Ascending aorta (tissue), 2 donors: ENCODE measurements at regions of chr15 and their contacts with region 1.

Region 1: GRCh38 chr15:25724899-25725298 is 138.2 kb downstream of the ATP10A start:
- DNase-seq: peak in 1 of 2 donors; percentile 53
- H3K4me3 ChIP-seq: no peak overlapping the region
- H3K27ac ChIP-seq: no peak overlapping the region
- H3K4me1 ChIP-seq: peaks cover 0 to 19% of the 10 kb centered on the region in 2 donors
- H3K27me3 ChIP-seq: no peaks in the 10 kb centered on the region
- CTCF ChIP-seq: no peak

Region 2: DNA sequence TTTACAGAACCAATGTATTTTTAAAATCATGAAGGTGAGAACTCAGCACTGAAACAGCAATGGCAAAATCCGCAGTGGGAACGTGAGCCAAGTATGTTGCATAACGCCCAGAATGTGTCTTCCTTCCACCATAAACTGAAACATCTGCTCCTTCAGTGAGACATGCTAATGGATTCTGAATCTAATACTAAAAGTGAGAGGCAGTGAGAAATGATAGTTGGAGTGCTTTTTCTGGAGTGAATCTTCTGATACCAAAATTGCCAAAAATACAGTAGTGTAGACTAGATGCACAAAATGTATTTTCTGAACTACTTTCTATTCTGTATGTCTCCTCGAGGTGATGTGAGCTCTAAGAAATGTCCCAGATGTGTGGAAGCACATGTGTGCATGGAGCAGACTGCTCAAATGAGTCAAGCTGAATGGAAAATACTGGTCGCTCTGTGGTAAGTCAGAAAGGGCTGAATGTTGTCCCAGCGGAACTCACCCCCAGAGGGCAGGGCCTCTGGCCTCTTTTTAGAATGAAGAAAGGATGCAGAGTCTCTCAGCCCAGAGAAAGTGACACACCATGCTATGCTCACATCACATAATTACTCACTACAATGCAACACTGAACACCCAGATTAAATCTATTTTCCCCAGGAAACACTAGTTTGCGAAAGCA is 65.2 kb after region 1 on chr15:
- intact Hi-C with region 1: loop called (anchors 5 kb)
- DNase-seq: peak in 1 of 2 donors; percentile 84
- H3K4me3 ChIP-seq: no peak overlapping the region
- H3K27ac ChIP-seq: peak overlapping the region; percentile 64 to 71
- H3K4me1 ChIP-seq: peaks cover 8 to 41% of the 10 kb centered on the region in 2 donors
- H3K27me3 ChIP-seq: no peaks in the 10 kb centered on the region
- CTCF ChIP-seq: no peak